ENCODE measurements at regions of chr4 and their contacts with region 1.

Region 1: DNA sequence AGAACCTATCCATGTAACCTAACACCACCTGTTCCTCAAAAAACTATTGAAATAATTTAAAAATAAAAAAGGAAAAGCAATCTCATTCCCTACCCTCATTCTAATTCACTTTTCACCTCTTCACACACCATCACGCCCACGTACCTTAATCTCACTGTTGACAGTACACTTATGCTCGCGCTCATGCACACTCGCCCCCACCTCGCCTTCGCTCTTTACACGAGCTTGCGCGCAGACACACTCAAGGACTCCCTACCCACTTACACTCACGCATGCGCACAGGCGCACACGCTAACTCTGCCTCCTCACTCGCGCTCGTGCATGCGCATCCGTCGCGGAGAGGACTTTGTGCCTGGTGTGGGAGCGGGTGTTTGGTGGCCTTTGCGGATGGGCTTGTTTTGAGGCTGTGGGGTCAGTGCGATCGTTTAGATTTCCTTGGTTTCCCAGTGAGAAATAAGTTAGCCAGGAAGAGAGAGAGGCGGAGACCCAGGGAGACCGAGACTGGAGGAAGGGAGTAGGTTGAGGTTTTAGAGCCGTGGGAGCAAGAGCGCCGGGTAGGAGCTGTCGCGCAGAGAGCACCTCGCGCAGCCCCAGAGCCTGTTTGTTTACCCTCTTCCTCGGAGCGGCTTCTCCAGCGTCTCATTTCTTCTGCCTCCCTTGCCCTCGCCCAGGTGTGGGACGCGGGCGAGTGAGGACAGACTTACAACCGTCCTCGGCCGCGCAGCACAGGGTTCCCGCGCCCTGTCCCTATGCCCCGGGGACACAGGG is 8.1 kb upstream of the GSX2 start:
- DNase-seq: peak; percentile 72 to 89 (median 83)
- ATAC-seq: peak; percentile 91
- H3K4me3 ChIP-seq: peak overlapping the region; percentile 67
- H3K4me3 Mint-ChIP-seq: peak overlapping the region; percentile 87 to 97 (median 88)
- H3K27ac ChIP-seq: no peak overlapping the region
- H3K27ac Mint-ChIP-seq: peak overlapping the region in 7 of 9 donors; percentile 2 to 66 (median 29)
- H3K4me1 ChIP-seq: peaks cover 0 to 11% of the 10 kb centered on the region in 2 donors
- H3K4me1 Mint-ChIP-seq: peaks cover 18 to 36% (median 29%) of the 10 kb centered on the region in 7 donors
- H3K27me3 ChIP-seq: peaks cover 11 to 33% of the 10 kb centered on the region in 2 donors
- H3K27me3 Mint-ChIP-seq: peaks cover 56 to 83% (median 59%) of the 10 kb centered on the region in 5 donors

Region 2: DNA sequence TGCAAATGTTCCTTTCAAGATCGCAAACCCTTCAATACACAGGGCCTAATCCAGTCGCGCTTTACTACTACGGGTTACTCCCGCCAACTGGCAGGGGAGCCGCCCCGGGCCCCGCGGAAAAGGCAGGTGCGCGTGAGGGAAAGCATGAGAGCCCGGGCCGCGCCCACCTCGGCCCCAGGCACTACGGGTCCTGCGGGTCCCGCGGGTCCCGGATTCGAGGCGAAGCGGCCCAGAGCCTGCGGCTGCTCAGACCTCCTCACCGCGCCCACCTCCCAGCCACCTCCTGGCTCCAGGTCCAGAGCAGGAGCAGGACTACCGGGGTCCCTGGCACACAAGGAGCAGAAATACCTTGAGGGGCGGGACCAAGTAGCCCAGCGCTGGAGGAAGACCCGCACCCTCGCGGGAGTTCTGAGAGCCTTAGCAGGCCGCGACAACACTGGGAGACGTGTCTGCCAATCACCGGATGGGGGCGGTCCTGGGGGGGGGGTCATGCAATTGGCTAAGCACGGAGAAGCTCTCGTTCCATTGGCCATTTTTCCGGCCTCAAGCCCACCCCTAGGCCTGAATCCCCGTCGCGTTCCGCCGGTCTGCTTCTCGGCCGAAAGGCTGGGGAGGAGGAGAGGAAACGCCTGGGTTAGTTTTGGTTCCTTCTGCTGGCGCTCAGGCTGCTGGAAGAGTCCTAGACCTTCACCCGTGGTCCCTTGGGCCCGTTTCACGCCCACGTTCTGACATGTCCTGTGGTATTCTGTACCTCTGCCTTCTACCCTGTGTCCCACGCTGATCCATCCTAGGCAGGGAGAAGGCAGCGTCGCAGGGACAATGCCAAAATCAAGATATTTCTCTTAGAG is 1369.6 kb before region 1 on chr4:
- CTCF ChIA-PET with region 1: no interaction called
- POLR2A ChIA-PET with region 1: no interaction called
- intact Hi-C with region 1: loop called in 1 of 2 experiments (anchors 1 kb)
- DNase-seq: peak; percentile 62 to 87 (median 81)
- ATAC-seq: peak; percentile 99
- H3K4me3 ChIP-seq: peak overlapping the region; percentile 83
- H3K4me3 Mint-ChIP-seq: peak overlapping the region; percentile 55 to 90 (median 79)
- H3K27ac ChIP-seq: peak overlapping the region; percentile 86
- H3K27ac Mint-ChIP-seq: peak overlapping the region; percentile 54 to 95 (median 86)
- H3K4me1 ChIP-seq: no peaks in the 10 kb centered on the region
- H3K4me1 Mint-ChIP-seq: peaks cover 5 to 14% (median 11%) of the 10 kb centered on the region in 7 donors
- H3K27me3 ChIP-seq: no peaks in the 10 kb centered on the region
- H3K27me3 Mint-ChIP-seq: peaks cover 0 to 11% (median 0%) of the 10 kb centered on the region in 5 donors

Region 3: GRCh38 chr4:53365486-53366300 is 726.1 kb before region 1 on chr4 and contains the start of gene SCFD2:
- CTCF ChIA-PET with region 1: no interaction called
- POLR2A ChIA-PET with region 1: no interaction called
- intact Hi-C with region 1: loop called in 1 of 2 experiments (anchors 10 kb)
- DNase-seq: peak; percentile 86 to 97 (median 94)
- ATAC-seq: peak; percentile 99
- H3K4me3 ChIP-seq: peak within 1 kb of the TSS; percentile 72
- H3K4me3 Mint-ChIP-seq: peak within 1 kb of the TSS; percentile 92 to 99 (median 96)
- H3K27ac ChIP-seq: peak within 1 kb of the TSS; percentile 85
- H3K27ac Mint-ChIP-seq: peak within 1 kb of the TSS; percentile 95 to 99 (median 96)
- H3K4me1 ChIP-seq: peaks cover 7 to 23% of the 10 kb centered on the region in 2 donors
- H3K4me1 Mint-ChIP-seq: peaks cover 32 to 64% (median 50%) of the 10 kb centered on the region in 7 donors
- H3K27me3 ChIP-seq: no peaks in the 10 kb centered on the region
- H3K27me3 Mint-ChIP-seq: peaks cover 0 to 20% (median 3%) of the 10 kb centered on the region in 5 donors
- total RNA-seq, gene SCFD2: 13.4 to 32.8 (median 28.0) TPM

Region 4: GRCh38 chr4:53908661-53909078 is 183.2 kb before region 1 on chr4:
- CTCF ChIA-PET with region 1: no interaction called
- POLR2A ChIA-PET with region 1: no interaction called
- intact Hi-C with region 1: loop called in 1 of 2 experiments (anchors 5 kb)
- DNase-seq: peak in 4 of 9 donors; percentile 6 to 28 (median 18)
- ATAC-seq: peak; percentile 82
- H3K4me3 ChIP-seq: no peak overlapping the region
- H3K4me3 Mint-ChIP-seq: peak overlapping the region in 4 of 10 donors; percentile 9 to 45 (median 30)
- H3K27ac ChIP-seq: no peak overlapping the region
- H3K27ac Mint-ChIP-seq: no peak overlapping the region
- H3K4me1 ChIP-seq: no peaks in the 10 kb centered on the region
- H3K4me1 Mint-ChIP-seq: peaks cover 0 to 20% (median 12%) of the 10 kb centered on the region in 7 donors
- H3K27me3 ChIP-seq: no peaks in the 10 kb centered on the region
- H3K27me3 Mint-ChIP-seq: peaks cover 32 to 60% (median 48%) of the 10 kb centered on the region in 5 donors

Region 5: GRCh38 chr4:53929955-53930798 is 161.6 kb before region 1 on chr4:
- CTCF ChIA-PET with region 1: no interaction called
- POLR2A ChIA-PET with region 1: no interaction called
- intact Hi-C with region 1: loop called (anchors 1 to 5 kb)
- DNase-seq: peak in 8 of 9 donors; percentile 24 to 56 (median 49)
- ATAC-seq: peak; percentile 80
- H3K4me3 ChIP-seq: no peak overlapping the region
- H3K4me3 Mint-ChIP-seq: no peak overlapping the region
- H3K27ac ChIP-seq: no peak overlapping the region
- H3K27ac Mint-ChIP-seq: no peak overlapping the region
- H3K4me1 ChIP-seq: no peaks in the 10 kb centered on the region
- H3K4me1 Mint-ChIP-seq: no peaks in the 10 kb centered on the region
- H3K27me3 ChIP-seq: no peaks in the 10 kb centered on the region
- H3K27me3 Mint-ChIP-seq: peaks cover 2 to 12% (median 11%) of the 10 kb centered on the region in 5 donors

Region 6: DNA sequence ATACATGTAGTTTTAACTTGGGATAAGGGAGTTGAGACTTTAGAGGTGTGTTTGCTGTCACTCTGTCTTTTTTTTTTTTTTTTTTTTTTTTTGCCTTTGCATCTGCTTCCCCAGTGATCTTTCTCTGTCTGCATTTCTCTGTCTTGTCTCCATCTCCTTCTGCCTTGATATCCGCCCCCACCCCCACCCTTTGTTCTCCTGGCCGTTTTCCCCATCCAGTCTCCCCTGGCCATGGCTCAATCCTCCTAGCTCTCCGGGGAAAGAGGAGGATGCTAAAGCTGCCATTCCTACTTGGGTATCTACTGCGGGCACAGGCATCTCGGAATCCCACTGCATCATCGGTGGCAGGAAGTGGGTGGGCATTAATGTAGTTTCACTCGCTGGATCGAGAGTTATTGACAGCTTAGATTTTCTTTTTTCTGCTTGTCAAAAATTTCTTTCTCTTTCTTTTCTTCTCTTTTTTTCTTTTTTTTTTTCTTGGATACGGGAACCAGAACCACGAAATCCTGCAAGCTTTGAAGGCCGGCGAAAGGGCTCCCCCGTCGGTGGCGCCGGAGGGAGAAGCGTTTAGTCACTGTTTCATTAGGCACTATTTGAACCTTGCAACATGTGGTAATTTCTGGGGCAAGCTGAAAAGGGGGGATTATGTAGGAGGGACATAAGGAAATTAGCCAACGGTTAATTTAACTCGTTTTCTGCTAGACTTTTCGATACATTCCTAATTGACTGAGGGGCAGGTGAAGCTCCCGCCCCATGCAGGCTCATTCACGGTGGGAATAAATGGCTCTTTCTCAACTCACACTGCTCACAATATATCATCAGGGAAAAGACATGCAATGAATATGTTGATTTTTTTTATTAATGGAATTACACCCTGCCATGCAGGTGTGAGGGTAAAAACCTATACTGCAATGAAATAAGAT is 16.4 kb after region 1 on chr4:
- CTCF ChIA-PET with region 1: no interaction called
- POLR2A ChIA-PET with region 1: interaction called, 4 read pairs
- intact Hi-C with region 1: loop called in 1 of 2 experiments (anchors 1 kb)
- DNase-seq: no peak
- ATAC-seq: no peak
- H3K4me3 ChIP-seq: peak overlapping the region; percentile 7
- H3K4me3 Mint-ChIP-seq: peak overlapping the region; percentile 17 to 86 (median 76)
- H3K27ac ChIP-seq: no peak overlapping the region
- H3K27ac Mint-ChIP-seq: peak overlapping the region in 1 of 9 donors; percentile 10
- H3K4me1 ChIP-seq: peaks cover 5 to 16% of the 10 kb centered on the region in 2 donors
- H3K4me1 Mint-ChIP-seq: peaks cover 16 to 47% (median 31%) of the 10 kb centered on the region in 7 donors
- H3K27me3 ChIP-seq: peaks cover 4 to 46% of the 10 kb centered on the region in 2 donors
- H3K27me3 Mint-ChIP-seq: peaks cover 74 to 87% (median 80%) of the 10 kb centered on the region in 5 donors

Measured in naive thymus-derived CD4-positive, alpha-beta T cell (primary cell).